KBM-7 (cell line): ENCODE measurements at regions of chr15 and their contacts with region 1.

Region 1: DNA sequence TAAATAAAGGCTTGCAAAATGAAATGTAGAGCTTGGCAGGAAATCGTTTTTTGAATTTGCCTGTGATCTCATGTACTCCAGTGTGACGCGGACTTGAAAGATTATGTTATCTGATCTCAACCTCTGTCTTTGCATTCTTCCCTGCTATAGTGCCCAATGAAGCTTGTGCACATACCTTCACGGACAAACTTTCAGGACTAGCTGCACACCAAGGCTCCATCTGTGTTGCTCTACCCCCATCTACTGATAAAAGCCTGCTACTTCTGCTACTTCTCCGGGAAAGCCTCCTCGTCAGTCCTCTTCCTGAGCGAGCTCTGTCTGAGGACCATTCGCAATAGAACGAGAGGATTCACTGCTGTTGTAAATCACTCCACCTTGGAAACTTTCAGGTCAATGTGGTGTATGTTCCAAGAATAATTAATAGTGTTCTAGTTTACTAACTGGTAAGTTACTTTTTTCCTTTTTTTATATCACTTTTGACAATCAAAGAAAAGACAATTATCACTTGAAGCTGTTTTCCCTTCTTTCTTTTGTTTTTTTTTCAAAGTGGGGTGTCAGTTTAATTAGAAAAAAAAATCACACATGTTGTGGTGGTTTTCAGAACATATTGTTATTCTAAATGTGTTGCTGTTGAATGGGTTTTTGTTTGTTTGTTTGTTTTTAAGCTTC is 217.6 kb downstream of the ARRDC4 start:
- DNase-seq: peak; percentile 74

Region 2: DNA sequence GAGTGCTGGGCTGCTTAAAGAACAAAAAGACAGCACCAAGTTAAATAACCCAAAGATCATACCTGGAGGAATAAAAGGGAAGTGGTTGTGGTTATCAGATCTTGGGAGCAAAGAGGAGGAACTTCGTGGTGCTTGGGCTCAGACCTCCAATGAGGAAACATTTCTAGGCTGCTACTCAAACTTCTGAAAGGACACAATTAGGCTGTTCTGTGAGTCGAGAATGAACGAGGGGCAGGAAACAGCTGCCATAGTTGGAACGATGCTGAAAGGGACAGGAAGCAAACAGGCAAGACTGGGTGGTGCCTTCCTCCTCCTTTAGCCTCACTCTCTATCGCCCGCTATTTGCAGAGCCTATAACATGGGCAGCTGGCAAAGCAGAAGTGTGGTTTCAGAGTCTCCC is 493.8 kb before region 1 on chr15:
- in situ Hi-C with region 1: no loop called
- DNase-seq: peak; percentile 88

Region 3: GRCh38 chr15:97909291-97909891 is 268.7 kb before region 1 on chr15:
- in situ Hi-C with region 1: loop called (anchors 25 kb)
- DNase-seq: peak; percentile 69

Region 4: GRCh38 chr15:98231696-98232440 is 53.8 kb after region 1 on chr15:
- in situ Hi-C with region 1: no loop called
- DNase-seq: no peak